Transverse colon (tissue), 4 donors: ENCODE measurements at regions of chr2 and their contacts with region 1.

Region 1: GRCh38 chr2:24435391-24436316 is 55.4 kb upstream of the NCOA1 start:
- DNase-seq: peak; percentile 53
- H3K4me3 ChIP-seq: no peak overlapping the region
- H3K27ac ChIP-seq: peak overlapping the region; percentile 28 to 65 (median 44)
- H3K4me1 ChIP-seq: peaks cover 0 to 16% (median 2%) of the 10 kb centered on the region in 4 donors
- H3K27me3 ChIP-seq: no peaks in the 10 kb centered on the region
- CTCF ChIP-seq: no peak
- EP300 ChIP-seq: no peak
- POLR2A ChIP-seq: no peak

Region 2: GRCh38 chr2:24652265-24653182 is 216.9 kb after region 1 on chr2:
- in situ Hi-C with region 1: loop called in 1 of 4 experiments (anchors 25 kb)
- intact Hi-C with region 1: no loop called
- DNase-seq: no peak
- H3K4me3 ChIP-seq: no peak overlapping the region
- H3K27ac ChIP-seq: no peak overlapping the region
- H3K4me1 ChIP-seq: peaks cover 0 to 7% (median 3%) of the 10 kb centered on the region in 4 donors
- H3K27me3 ChIP-seq: no peaks in the 10 kb centered on the region
- CTCF ChIP-seq: no peak
- EP300 ChIP-seq: no peak
- POLR2A ChIP-seq: no peak